ENCODE measurements at regions of chrX and their contacts with region 1.

Region 1: DNA sequence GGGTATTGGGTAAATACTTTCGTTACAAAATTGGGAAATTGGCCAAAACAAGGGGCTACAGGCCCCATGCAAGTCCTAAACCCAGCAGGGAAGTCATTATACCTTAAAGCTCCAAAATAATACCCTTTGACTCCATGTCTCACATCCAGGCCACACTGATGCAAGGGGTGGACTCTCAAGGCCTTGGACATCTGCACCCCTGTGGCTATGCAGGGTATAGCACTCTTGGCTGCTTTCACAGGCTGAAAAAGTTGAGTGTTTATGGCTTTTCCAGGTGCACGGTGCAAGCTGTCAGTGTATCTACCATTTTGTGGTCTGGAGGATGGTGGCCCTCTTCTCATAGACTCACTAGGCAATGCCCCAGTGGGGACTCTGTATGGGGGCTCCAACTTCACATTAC is 326.5 kb downstream of the TEX13C start:
- DNase-seq: no peak
- ATAC-seq: no peak
- H3K4me3 ChIP-seq: no peak overlapping the region
- H3K27ac ChIP-seq: no peak overlapping the region
- H3K4me1 ChIP-seq: no peaks in the 10 kb centered on the region
- H3K27me3 ChIP-seq: no peaks in the 10 kb centered on the region
- CTCF ChIP-seq: peak in 1 of 3 experiments; percentile 20; a peak in 1 of 6 replicates
- POLR2A ChIP-seq: no peak
- RAD21 ChIP-seq: no peak

Region 2: GRCh38 chrX:124194199-124194598 is 1452.0 kb before region 1 on chrX:
- CTCF ChIA-PET with region 1: no interaction called
- POLR2A ChIA-PET with region 1: no interaction called
- RAD21 ChIA-PET with region 1: no interaction called
- intact Hi-C with region 1: loop called (anchors 10 kb)
- DNase-seq: no peak
- ATAC-seq: no peak
- H3K4me3 ChIP-seq: no peak overlapping the region
- H3K27ac ChIP-seq: no peak overlapping the region
- H3K4me1 ChIP-seq: no peaks in the 10 kb centered on the region
- H3K27me3 ChIP-seq: no peaks in the 10 kb centered on the region
- CTCF ChIP-seq: no peak
- POLR2A ChIP-seq: no peak
- RAD21 ChIP-seq: no peak